H1 (cell line): ENCODE measurements at regions of chr3 and their contacts with region 1.

Region 1: DNA sequence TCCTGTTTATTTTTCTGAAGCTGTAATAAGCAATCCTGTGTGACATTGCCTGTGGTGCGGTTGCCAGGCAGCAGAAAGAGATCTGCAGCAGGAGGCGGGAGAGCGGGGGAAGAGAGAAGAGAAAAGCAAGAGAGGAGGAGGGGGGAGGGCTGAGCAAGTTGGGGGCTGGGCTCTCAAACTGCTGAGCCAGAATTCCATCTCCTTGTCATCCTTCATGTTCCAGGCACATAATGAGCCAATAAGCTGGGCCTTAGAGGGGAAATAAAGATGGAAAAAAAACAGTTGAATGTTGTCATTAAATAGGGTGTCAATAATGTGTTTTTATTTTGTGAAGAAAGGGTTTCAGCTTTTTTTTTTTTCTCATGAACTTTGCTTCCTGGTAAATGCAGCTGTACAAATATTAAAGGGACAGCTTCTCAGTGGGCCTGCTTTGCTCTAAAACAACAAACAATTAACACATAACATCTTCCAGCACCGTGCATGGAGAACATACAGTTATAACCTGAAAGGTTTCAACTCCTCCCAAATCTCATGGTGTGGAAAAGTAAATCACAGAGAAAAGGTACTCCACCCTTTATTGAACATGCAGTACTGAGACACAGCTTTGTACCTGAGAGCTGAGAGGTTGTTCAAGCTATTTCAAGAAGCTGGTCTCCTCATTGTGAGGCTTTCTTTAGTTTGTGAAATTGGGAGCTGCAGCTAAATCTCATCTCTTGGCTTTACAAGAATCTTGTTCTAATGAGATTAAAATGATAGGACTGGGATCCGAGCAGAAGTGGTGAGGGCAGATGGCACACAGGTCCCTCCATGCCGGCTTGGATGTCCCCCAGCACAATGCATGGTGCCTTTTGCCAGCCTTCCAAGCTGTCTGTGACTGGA is 451.1 kb upstream of the KCNMB2 start:
- DNase-seq: peak; percentile 44 to 56
- H3K4me3 ChIP-seq: peak overlapping the region in 1 of 4 experiments; percentile 26; a peak in 1 of 8 replicates
- H3K27ac ChIP-seq: peak overlapping the region; percentile 68; the same call in 1 of the 2 replicates
- H3K4me1 ChIP-seq: peaks cover 0 to 12% (median 4%) of the 10 kb centered on the region in 4 experiments; a peak in 3 of 7 replicates
- H3K27me3 ChIP-seq: no peaks in the 10 kb centered on the region
- CTCF ChIP-seq: no peak
- EP300 ChIP-seq: peak in 1 of 2 experiments; percentile 52; a peak in 1 of 3 replicates
- POLR2A ChIP-seq: no peak
- RAD21 ChIP-seq: peak in 1 of 2 experiments; percentile 17; a peak in 1 of 4 replicates

Region 2: DNA sequence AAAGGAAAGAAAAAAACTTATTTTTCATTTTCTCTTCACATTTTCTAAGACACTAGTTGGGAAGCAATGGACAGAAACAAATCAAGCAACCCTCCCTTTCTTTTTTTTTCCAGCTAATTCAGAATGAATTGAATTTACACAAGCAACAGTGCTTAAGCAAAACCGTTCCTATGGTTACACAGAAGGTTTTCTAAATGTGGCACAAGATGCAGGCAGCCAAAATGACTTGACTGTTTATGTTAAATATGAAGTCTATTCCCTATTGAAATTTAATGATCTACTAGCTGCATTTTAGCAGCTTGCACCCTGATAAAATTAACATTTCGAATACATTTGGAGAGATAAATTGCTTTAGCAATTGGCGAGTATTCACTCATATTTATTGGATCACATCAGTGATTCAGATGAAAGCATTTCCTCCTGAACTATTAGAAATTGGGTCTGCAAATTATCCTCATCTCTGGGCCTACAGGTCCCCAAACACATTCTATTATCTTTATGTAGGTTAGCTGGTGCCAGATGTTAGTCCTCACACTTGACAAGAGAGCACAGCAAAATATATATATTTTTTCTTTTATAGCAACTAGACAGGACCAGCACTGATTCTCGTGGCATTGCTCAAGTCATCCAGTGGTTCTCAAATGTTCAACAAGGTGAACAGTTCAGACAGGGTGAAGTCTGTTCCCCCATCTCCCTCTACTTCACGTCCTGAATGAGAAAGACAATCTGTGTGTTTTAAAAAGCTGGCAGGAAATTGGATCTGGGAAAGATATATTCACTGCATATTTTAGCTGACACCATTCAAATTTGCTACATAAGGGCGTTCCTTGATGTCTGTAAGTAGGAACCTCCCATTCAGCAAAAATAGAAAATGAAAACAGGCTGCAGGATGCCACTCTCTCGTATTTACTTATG is 12.5 kb before region 1 on chr3:
- CTCF ChIA-PET with region 1: interaction called, 16 read pairs
- POLR2A ChIA-PET with region 1: no interaction called
- DNase-seq: no peak
- H3K4me3 ChIP-seq: no peak overlapping the region
- H3K27ac ChIP-seq: no peak overlapping the region
- H3K4me1 ChIP-seq: no peaks in the 10 kb centered on the region
- H3K27me3 ChIP-seq: no peaks in the 10 kb centered on the region
- CTCF ChIP-seq: no peak
- EP300 ChIP-seq: no peak
- POLR2A ChIP-seq: no peak
- RAD21 ChIP-seq: no peak

Region 3: DNA sequence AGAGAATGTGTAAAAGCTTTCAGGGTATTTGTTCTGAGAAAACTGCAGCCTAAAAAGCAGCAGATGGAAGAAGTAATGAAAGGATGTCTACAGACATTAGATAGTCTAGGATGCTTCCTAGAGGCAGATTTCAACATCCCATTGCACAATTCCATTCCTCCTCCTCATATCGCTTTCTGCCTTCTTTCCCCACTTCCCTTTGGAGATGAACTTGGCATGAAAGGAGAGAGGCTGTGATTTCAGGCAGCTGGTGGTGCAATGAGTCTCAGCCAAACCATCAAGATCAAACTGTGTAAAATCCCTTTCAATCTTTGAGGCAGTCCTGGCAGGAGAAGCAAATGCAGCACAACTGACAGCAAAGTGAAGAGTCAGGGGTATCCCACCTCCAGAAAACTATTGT is 12.4 kb after region 1 on chr3:
- CTCF ChIA-PET with region 1: interaction called, 13 read pairs
- POLR2A ChIA-PET with region 1: no interaction called
- DNase-seq: no peak
- H3K4me3 ChIP-seq: no peak overlapping the region
- H3K27ac ChIP-seq: no peak overlapping the region
- H3K4me1 ChIP-seq: no peaks in the 10 kb centered on the region
- H3K27me3 ChIP-seq: no peaks in the 10 kb centered on the region
- CTCF ChIP-seq: no peak
- EP300 ChIP-seq: no peak
- POLR2A ChIP-seq: no peak
- RAD21 ChIP-seq: no peak